ENCODE measurements at regions of chr12 and their contacts with region 1.

Region 1: GRCh38 chr12:53746592-53747092 is 5.1 kb downstream of the CISTR start:
- DNase-seq: peak; percentile 91 to 97 (median 95)
- H3K4me3 ChIP-seq: no peak overlapping the region
- H3K27ac ChIP-seq: no peak overlapping the region
- H3K4me1 ChIP-seq: peaks cover 4% of the 10 kb centered on the region
- H3K27me3 ChIP-seq: no peaks in the 10 kb centered on the region
- CTCF ChIP-seq: peak; percentile 99
- EP300 ChIP-seq: no peak
- POLR2A ChIP-seq: no peak

Region 2: DNA sequence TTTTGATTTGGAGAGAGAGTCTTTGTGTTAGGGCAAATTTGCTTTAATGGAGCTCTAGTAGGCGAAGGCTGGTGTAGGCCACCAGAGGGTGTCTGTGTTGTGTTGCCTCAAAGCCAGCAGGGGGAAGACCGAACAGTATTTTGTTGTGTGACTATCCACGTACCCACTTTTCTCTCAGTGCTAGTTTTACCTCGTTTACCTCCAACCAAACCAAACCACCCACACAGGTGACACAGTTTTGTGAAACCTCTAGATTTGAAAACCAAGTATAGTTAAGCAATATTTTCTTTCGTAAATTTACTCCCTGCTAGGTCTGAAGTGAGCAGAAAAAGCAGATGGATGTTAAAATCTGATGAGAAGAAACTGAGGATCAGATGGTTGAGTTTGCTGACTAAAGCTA is 203.1 kb before region 1 on chr12:
- intact Hi-C with region 1: loop called (anchors 5 to 10 kb)
- DNase-seq: peak; percentile 53 to 66 (median 61)
- H3K4me3 ChIP-seq: no peak overlapping the region
- H3K27ac ChIP-seq: peak overlapping the region in 1 of 2 donors; percentile 59
- H3K4me1 ChIP-seq: peaks cover 5% of the 10 kb centered on the region
- H3K27me3 ChIP-seq: no peaks in the 10 kb centered on the region
- CTCF ChIP-seq: peak; percentile 50 to 93 (median 81)
- EP300 ChIP-seq: no peak
- POLR2A ChIP-seq: no peak

Region 3: DNA sequence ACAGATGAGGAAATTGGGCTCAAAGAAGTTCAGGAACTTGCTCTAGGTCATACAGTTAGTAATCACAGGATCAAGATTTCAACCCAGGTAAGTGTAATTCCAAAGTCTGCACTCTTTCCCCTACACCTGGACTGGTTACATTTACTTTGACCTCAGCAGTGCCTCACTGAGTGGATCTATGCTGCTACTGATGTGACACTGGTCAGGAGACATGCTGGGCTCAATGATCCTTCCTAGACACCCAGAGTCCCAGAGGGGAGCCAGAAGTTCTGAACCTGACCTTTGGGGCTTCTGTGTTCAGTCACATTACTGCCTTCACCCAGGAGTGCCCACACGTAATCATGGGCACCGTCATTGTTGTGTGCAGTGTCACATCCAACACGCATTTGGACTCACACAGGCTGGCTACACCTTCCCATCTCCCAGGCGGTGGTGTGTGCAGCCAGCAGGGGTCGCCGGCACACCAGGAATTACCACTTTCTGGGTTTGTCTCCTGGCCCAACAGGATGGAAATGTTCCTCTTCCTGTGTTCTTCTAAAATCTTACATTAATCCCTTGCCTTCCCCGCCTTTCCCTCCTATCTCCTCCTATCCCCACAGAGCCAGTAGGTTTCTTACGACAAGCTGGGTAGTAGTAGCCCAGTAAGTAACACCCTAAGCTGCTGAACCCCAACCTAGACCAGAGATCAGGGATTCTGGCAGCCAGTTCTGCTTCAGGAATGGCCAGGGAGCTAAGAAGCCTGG is 45.0 kb before region 1 on chr12:
- intact Hi-C with region 1: loop called (anchors 2 to 5 kb)
- DNase-seq: peak; percentile 69 to 90 (median 84)
- H3K4me3 ChIP-seq: no peak overlapping the region
- H3K27ac ChIP-seq: no peak overlapping the region
- H3K4me1 ChIP-seq: no peaks in the 10 kb centered on the region
- H3K27me3 ChIP-seq: no peaks in the 10 kb centered on the region
- CTCF ChIP-seq: peak; percentile 53 to 82 (median 72)
- EP300 ChIP-seq: no peak
- POLR2A ChIP-seq: no peak